ENCODE measurements at regions of chr1 and their contacts with region 1.

Region 1: GRCh38 chr1:32650752-32651460 is at the start of gene RBBP4:
- DNase-seq: peak; percentile 94 to 99 (median 98)
- ATAC-seq: peak; percentile 79
- H3K4me3 ChIP-seq: peak within 1 kb of the TSS; percentile 80
- H3K4me3 Mint-ChIP-seq: peak within 1 kb of the TSS; percentile 94
- H3K27ac ChIP-seq: peak within 1 kb of the TSS; percentile 98 to 99
- H3K27ac Mint-ChIP-seq: peak within 1 kb of the TSS; percentile 95
- H3K4me1 ChIP-seq: peaks cover 58% of the 10 kb centered on the region
- H3K4me1 Mint-ChIP-seq: peaks cover 66% of the 10 kb centered on the region
- H3K27me3 ChIP-seq: no peaks in the 10 kb centered on the region
- H3K27me3 Mint-ChIP-seq: no peaks in the 10 kb centered on the region
- CTCF ChIP-seq: no peak
- total RNA-seq, gene RBBP4: 108 to 117 TPM

Region 2: DNA sequence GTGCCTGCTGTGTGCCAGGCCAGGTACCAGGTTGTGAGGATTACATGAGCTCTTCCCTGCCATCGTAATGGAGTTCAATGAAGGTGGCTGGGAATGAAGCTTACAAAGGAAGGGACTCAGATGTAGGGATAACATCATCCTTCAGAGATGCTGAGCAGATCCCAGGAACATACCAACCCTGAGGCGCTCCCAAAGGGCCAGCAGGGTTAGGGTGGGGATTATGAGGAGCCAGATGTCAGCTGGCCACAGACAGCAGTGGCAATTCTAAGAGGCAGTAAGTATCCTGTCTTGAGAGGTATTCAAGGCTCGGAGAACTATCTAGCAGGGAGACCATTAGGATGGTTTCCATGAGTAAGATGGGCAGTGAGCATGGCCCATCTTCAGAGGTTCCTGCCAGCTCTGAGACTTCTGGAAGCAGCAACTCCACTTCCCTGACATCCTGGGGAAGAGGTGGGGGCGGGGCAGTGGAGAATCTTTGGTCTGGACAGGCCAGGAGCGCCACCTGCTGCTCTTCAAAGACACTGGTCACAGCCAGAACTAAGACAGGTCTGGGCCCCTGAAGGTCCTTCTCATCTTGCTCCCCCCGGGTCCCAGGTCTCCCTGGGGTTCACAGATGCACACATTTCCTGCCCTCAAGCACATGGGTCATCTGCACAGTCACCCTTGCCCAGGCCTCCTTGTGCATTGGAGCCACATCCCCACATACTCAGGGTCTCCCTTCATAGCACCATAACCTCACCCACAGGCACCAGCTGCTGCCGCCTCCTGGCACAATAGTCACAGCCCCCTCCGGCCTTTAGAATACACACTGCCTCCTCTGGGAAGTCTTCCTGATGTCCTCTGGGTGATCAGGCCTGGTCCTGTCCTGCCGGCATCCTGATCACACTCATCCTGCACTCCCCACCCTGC is 1739.6 kb before region 1 on chr1:
- CTCF ChIA-PET with region 1: no interaction called
- POLR2A ChIA-PET with region 1: no interaction called
- intact Hi-C with region 1: loop called in 1 of 2 experiments (anchors 5 kb)
- DNase-seq: peak in 12 of 14 experiments; percentile 11 to 71 (median 38)
- ATAC-seq: no peak
- H3K4me3 ChIP-seq: no peak overlapping the region
- H3K4me3 Mint-ChIP-seq: peak overlapping the region; percentile 72
- H3K27ac ChIP-seq: no peak overlapping the region
- H3K27ac Mint-ChIP-seq: no peak overlapping the region
- H3K4me1 ChIP-seq: peaks cover 32% of the 10 kb centered on the region
- H3K4me1 Mint-ChIP-seq: peaks cover 16% of the 10 kb centered on the region
- H3K27me3 ChIP-seq: peaks cover 22 to 32% of the 10 kb centered on the region in 2 experiments
- H3K27me3 Mint-ChIP-seq: peaks cover 27% of the 10 kb centered on the region
- CTCF ChIP-seq: peak; percentile 60

Region 3: DNA sequence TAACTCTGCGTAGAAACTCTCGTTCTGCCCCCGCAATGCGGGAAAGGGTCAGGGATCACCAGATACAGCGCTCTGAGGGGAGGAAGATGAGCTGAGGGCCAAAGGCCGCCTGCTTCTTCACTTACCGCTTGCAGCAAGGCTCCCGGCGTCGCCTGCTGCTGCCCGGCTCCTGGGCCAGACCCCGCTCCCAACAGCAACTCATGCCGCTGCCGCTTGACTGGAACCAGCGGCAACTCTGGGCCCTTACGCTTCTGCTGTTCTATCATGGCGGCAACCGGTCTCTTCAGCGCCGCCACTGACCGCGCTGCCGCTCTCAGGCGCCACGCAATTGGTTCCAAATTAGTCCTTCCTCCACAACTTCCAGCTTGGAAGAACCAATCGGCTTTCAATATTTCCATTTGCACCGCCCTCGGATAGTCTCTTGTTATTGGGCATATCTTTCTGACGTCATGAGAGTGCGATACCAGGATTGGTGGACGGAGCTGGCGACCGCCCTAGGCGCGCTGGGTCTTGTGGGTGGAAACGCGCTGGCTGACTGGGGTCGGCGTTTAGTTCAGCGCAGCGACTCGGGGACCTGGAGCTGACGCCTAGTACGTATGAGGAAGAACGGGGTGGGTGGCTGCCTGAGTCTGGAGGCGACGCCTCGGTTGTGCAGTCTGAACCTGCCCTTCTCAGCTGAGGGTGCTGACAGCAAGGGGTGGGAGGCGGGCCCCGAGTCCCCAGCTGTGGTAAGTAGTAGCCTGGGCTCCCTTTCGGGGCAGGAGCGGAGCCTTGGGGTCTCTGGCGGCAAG is 1354.2 kb before region 1 on chr1 and contains the starts of genes SNRNP40 and ZCCHC17:
- CTCF ChIA-PET with region 1: no interaction called
- POLR2A ChIA-PET with region 1: interaction called, 5 read pairs
- intact Hi-C with region 1: loop called in 1 of 2 experiments (anchors 5 kb)
- DNase-seq: peak; percentile 84 to 99 (median 90)
- ATAC-seq: peak; percentile 94
- H3K4me3 ChIP-seq: peak within 1 kb of the TSS; percentile 90
- H3K4me3 Mint-ChIP-seq: no peak within 1 kb of the TSS
- H3K27ac ChIP-seq: peak within 1 kb of the TSS; percentile 83 to 91
- H3K27ac Mint-ChIP-seq: no peak within 1 kb of the TSS
- H3K4me1 ChIP-seq: peaks cover 41% of the 10 kb centered on the region
- H3K4me1 Mint-ChIP-seq: peaks cover 13% of the 10 kb centered on the region
- H3K27me3 ChIP-seq: no peaks in the 10 kb centered on the region
- H3K27me3 Mint-ChIP-seq: no peaks in the 10 kb centered on the region
- CTCF ChIP-seq: no peak
- total RNA-seq, gene SNRNP40: 48.4 to 53.7 TPM
- total RNA-seq, gene ZCCHC17: 7.3 to 7.6 TPM

Region 4: DNA sequence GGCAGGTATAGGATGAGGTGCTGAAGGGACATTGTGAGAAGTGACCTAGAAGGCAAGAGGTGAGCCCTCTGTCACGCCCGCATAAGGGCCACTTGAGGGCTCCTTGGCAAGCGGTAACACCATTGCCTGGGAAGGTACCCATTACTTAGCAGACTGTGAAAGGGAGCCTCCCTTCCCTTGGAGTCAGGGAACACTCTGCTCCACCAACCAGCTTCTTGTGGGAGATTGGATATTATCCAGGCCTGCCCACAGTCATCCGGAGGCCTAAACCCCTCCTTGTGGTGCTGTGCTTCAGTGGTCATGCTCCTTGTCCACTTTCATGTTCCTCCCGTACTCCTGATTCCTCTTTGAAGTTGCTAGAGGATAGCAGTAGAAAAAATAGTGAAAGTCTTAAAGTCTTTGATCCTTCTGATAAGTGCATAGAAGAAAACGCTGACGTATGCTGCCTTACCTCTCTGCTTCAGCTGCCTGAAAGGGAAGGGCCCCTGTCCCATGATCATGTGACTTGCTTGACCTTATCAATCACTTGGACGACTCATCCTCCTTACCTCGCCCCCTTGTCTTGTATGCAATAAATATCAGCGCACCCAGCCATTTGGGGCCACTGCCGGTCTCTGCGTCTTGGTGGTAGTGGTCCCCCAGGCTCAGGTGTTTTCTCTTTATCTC is 16.1 kb after region 1 on chr1:
- CTCF ChIA-PET with region 1: no interaction called
- POLR2A ChIA-PET with region 1: interaction called, 16 read pairs
- intact Hi-C with region 1: no loop called
- DNase-seq: no peak
- ATAC-seq: no peak
- H3K4me3 ChIP-seq: no peak overlapping the region
- H3K4me3 Mint-ChIP-seq: no peak overlapping the region
- H3K27ac ChIP-seq: no peak overlapping the region
- H3K27ac Mint-ChIP-seq: no peak overlapping the region
- H3K4me1 ChIP-seq: no peaks in the 10 kb centered on the region
- H3K4me1 Mint-ChIP-seq: peaks cover 10% of the 10 kb centered on the region
- H3K27me3 ChIP-seq: no peaks in the 10 kb centered on the region
- H3K27me3 Mint-ChIP-seq: no peaks in the 10 kb centered on the region
- CTCF ChIP-seq: no peak